Mammary epithelial cell (primary cell): ENCODE measurements at regions of chr9 and their contacts with region 1.

Region 1: GRCh38 chr9:32589083-32589723 is 16.2 kb upstream of the NDUFB6 start:
- DNase-seq: peak; percentile 35
- H3K4me3 ChIP-seq: no peak overlapping the region
- H3K27ac ChIP-seq: no peak overlapping the region
- H3K4me1 ChIP-seq: no peaks in the 10 kb centered on the region
- H3K27me3 ChIP-seq: no peaks in the 10 kb centered on the region
- CTCF ChIP-seq: peak; percentile 59 to 71

Region 2: DNA sequence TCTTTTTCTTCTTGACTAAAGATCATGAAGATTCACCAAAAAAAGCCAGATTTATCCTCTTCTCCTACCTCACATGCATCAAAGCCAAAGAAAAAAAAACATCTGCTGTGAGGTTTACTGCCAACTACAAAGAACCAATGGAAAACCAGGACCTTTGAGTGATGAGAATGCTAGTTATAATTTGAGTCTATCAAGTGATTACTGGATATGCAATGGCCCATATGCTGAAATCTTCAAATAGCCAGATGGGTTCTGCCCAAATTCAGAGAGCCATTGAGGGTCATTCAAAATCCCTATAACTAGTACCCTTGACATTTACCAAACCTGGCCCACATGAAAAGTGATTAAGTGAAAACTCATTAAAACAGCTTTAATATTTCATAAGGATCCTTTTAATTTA is 283.2 kb before region 1 on chr9:
- CTCF ChIA-PET with region 1: no interaction called
- dilution Hi-C with region 1: no loop called
- in situ Hi-C with region 1: no loop called
- intact Hi-C with region 1: no loop called
- DNase-seq: no peak
- H3K4me3 ChIP-seq: no peak overlapping the region
- H3K27ac ChIP-seq: no peak overlapping the region
- H3K4me1 ChIP-seq: no peaks in the 10 kb centered on the region
- H3K27me3 ChIP-seq: peaks cover 3% of the 10 kb centered on the region
- CTCF ChIP-seq: no peak

Region 3: GRCh38 chr9:32644698-32645097 is 55.5 kb after region 1 on chr9:
- CTCF ChIA-PET with region 1: no interaction called
- dilution Hi-C with region 1: no loop called
- in situ Hi-C with region 1: no loop called
- intact Hi-C with region 1: loop called (anchors 10 kb)
- DNase-seq: peak; percentile 91
- H3K4me3 ChIP-seq: no peak overlapping the region
- H3K27ac ChIP-seq: no peak overlapping the region
- H3K4me1 ChIP-seq: peaks cover 3% of the 10 kb centered on the region
- H3K27me3 ChIP-seq: no peaks in the 10 kb centered on the region
- CTCF ChIP-seq: no peak

Region 4: DNA sequence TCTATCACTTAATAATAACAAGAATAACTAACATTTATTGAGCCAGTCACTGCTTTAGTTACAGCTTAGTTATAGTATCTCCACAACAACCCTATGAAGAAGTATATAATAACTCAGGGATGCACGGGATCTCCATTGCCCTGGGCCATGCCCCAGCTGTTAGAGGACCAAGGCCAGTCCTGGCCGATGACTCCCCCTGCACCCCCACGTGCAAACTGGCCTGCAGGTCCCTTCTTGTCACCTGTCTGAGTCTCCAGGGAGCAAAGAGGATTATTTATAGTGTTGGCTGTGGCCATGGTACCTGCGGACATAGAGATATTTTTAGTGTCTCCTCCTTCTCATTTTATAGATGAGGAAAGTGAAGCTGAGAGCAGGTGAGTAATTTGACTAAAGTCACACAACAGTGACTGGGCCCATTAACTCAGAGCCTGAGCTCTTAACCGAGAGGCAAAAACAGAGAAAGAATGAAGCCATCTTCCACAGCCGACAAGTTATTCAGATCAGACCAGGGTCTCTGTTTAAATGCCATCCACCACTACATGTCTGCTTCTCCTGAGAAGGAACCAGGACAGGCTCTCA is 288.5 kb after region 1 on chr9:
- CTCF ChIA-PET with region 1: no interaction called
- dilution Hi-C with region 1: no loop called
- in situ Hi-C with region 1: no loop called
- intact Hi-C with region 1: loop called (anchors 2 kb)
- DNase-seq: no peak
- H3K4me3 ChIP-seq: no peak overlapping the region
- H3K27ac ChIP-seq: peak overlapping the region; percentile 12
- H3K4me1 ChIP-seq: peaks cover 14% of the 10 kb centered on the region
- H3K27me3 ChIP-seq: no peaks in the 10 kb centered on the region
- CTCF ChIP-seq: no peak